ENCODE measurements at regions of chr14 and their contacts with region 1.

Region 1: DNA sequence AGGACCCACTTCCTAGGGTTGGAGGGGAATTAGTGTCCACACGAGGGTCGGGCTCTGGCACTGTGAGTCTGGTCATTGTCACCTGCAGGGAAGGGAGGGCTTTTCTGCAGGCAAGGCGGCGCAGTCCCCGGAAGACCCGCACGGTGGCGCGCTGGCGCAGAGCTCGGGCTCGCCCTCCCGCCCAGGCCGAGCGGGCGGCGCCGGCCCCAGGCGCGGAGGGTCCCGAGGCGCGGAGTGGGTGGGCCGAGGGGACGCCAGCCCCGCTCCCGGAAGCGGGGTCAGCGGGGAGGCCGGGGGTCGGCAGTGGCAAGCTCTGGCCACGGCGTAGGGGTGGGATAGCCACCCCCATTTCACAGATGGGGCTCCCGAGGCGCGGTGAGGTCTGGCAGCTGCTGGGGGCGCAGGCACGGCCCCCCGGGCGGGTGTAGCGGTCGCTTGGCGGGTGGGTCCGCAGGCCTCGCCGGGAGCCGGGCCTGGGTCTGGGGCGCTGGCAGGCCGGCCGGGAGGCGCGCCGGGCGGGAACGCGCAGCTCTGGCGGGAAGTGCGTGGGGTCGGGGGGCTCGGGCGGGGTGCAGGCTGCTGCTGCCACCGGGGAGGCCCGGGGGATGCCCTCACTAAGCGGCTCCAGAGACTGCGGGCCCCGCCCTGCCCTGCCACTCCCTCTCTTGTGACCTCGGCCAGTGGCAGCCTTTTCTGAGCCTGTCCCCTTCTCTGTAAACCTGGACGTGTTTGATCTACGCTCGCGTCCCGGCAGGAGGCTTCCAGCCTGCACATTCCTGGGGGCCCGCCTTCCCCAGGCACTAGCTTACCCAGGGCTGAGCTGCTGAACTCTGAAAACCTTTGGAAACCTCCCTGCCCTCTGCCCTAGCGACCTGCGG is 46.1 kb downstream of the CYP46A1 start:
- DNase-seq: peak; percentile 49
- ATAC-seq: peak; percentile 70
- H3K4me3 Mint-ChIP-seq: peak overlapping the region; percentile 32
- H3K27ac Mint-ChIP-seq: no peak overlapping the region
- H3K4me1 Mint-ChIP-seq: peaks cover 2% of the 10 kb centered on the region
- H3K27me3 Mint-ChIP-seq: peaks cover 45% of the 10 kb centered on the region
- CTCF ChIP-seq: no peak

Region 2: GRCh38 chr14:99884834-99885648 is 154.8 kb after region 1 on chr14:
- CTCF ChIA-PET with region 1: interaction called, 3 read pairs
- POLR2A ChIA-PET with region 1: no interaction called
- intact Hi-C with region 1: loop called (anchors 1 kb)
- DNase-seq: no peak
- ATAC-seq: peak; percentile 54
- H3K4me3 Mint-ChIP-seq: no peak overlapping the region
- H3K27ac Mint-ChIP-seq: no peak overlapping the region
- H3K4me1 Mint-ChIP-seq: no peaks in the 10 kb centered on the region
- H3K27me3 Mint-ChIP-seq: peaks cover 18% of the 10 kb centered on the region
- CTCF ChIP-seq: peak; percentile 49

Region 3: DNA sequence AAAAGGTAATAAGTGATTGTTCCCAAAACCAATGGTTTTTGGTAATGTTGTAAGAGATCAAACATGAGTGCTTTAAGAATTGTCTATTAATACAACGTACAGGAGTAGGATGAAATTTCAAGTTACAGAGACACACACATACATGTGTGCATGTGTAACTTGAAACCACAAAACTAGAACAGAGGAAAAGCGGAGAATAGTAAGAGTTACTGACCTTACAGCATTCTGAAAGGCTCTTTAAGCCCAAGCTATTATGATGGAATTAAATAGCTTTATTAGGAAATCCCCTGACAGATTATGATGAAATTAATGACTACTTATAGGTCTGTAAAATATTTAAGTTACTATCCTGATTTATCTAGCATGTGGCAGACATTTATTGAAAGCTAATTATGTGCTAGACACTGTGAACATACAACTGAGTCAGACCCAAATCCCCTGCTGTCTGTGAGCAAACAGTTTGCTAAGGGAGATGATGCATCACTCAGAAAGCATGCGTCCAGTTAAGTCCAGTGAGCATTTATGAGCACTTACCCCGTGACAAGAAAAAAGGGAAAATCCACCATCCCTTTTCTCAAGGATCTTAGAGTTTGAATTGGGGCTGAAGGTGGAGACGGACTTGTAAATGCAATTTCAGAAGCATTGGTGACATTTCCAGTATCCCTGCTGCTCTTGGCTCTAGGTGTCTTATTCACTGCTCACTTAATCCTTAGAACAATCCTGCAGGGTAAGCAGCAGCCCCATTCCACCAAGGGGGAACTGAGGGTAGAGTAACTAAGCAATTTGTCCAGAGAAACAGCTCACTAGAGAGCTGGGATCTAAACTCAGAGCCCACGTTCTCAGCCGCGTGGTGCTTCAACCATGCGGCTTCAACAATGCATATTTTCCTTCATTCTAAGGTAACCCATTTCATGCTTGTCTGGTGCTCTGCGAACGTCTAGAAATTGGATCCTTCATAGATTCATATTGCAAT is 180.4 kb after region 1 on chr14:
- CTCF ChIA-PET with region 1: no interaction called
- POLR2A ChIA-PET with region 1: no interaction called
- intact Hi-C with region 1: no loop called
- DNase-seq: no peak
- ATAC-seq: no peak
- H3K4me3 Mint-ChIP-seq: no peak overlapping the region
- H3K27ac Mint-ChIP-seq: no peak overlapping the region
- H3K4me1 Mint-ChIP-seq: no peaks in the 10 kb centered on the region
- H3K27me3 Mint-ChIP-seq: peaks cover 16% of the 10 kb centered on the region
- CTCF ChIP-seq: no peak

Region 4: DNA sequence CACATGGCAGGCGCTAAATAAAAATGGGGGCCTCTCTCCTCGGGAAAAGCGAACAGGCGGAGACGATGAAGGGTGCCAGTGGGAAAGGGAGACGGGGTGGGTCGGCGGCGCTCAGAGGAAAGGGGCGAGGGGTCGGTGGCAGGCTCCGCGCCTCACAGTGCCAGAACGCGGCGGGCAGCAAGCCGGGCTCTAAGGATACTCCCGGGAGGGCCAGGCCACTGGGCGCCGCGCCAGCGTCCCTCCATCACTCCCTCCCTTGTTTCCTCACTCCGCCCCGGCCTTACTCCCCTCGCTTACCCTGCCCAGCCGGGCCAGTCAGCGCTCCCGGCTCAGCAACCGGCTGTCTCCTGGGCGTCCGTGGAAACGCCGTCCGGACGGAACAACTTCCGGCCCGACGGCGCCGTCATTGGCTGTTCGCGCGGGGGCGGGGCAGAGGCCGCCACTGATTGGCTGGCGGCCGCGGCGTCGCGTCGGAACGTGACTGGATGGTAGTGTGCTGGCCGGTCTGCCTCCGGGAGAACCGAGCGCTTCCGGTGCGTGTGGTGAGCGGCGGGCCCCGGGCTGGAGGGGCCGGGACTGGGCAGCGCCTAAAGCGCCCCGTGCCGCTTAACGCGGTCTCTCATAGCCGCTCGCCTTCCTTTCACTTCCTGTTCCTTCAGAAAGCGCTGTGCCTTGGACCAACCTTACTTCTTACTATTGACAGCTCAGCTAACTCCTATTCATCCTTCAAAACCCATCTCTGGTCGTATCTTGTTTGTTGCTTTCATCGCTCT is 645.9 kb after region 1 on chr14:
- CTCF ChIA-PET with region 1: no interaction called
- POLR2A ChIA-PET with region 1: no interaction called
- intact Hi-C with region 1: no loop called
- DNase-seq: peak; percentile 93
- ATAC-seq: peak; percentile 81
- H3K4me3 Mint-ChIP-seq: peak within 1 kb of the TSS; percentile 95
- H3K27ac Mint-ChIP-seq: peak within 1 kb of the TSS; percentile 95
- H3K4me1 Mint-ChIP-seq: peaks cover 48% of the 10 kb centered on the region
- H3K27me3 Mint-ChIP-seq: no peaks in the 10 kb centered on the region
- CTCF ChIP-seq: no peak